ENCODE measurements at regions of chr1 and their contacts with region 1.

Region 1: DNA sequence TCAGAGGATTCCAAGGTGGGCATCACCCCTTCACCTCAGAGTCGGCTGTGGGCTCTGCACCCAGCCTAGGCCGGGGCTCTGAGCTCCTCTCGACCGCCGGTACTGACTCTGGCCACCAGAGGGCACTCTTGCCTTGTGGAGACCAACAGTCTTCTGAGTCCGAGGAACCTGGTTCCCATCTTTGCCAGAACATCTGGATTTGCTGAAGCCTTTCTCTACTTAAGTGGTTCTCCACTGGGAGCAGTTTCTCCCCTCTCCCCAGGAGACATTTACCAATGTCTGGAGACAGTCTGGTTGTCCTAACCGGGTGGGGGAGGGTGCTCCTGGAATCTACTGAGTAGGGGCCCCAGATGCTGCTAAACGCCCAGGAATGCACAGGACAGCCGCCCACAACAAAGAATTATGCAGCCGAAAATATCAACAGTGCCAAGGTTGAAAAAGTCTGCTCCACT is 9.4 kb downstream of the ETV3L start:
- DNase-seq: peak; percentile 84 to 93 (median 87)
- ATAC-seq: peak; percentile 74 to 90 (median 86)
- H3K4me3 ChIP-seq: no peak overlapping the region
- H3K27ac ChIP-seq: peak overlapping the region in 2 of 12 donors; percentile 14 to 24
- H3K4me1 ChIP-seq: peaks cover 0 to 21% (median 5%) of the 10 kb centered on the region in 12 donors
- H3K27me3 ChIP-seq: no peaks in the 10 kb centered on the region
- CTCF ChIP-seq: peak; percentile 90 to 98 (median 96)
- POLR2A ChIP-seq: no peak

Region 2: GRCh38 chr1:157156058-157156541 is 65.9 kb after region 1 on chr1:
- intact Hi-C with region 1: loop called (anchors 1 kb)
- DNase-seq: peak; percentile 70 to 87 (median 73)
- ATAC-seq: peak; percentile 43 to 83 (median 72)
- H3K4me3 ChIP-seq: peak overlapping the region in 7 of 12 donors; percentile 8 to 34 (median 15)
- H3K27ac ChIP-seq: peak overlapping the region in 2 of 12 donors; percentile 23 to 38
- H3K4me1 ChIP-seq: peaks cover 10 to 31% (median 22%) of the 10 kb centered on the region in 12 donors
- H3K27me3 ChIP-seq: peaks cover 0 to 4% (median 0%) of the 10 kb centered on the region in 9 donors
- CTCF ChIP-seq: peak; percentile 91 to 99 (median 98)
- POLR2A ChIP-seq: no peak